Activated CD4-positive, alpha-beta T cell treated with anti-CD3 and anti-CD28 coated beads for 36 hours (primary cell): ENCODE measurements at regions of chr11 and their contacts with region 1.

Region 1: GRCh38 chr11:129279326-129280026 is 87.4 kb upstream of the ARHGAP32 start:
- DNase-seq: peak; percentile 79
- ATAC-seq: peak; percentile 30
- H3K4me3 Mint-ChIP-seq: peak overlapping the region; percentile 76
- H3K27ac Mint-ChIP-seq: peak overlapping the region; percentile 90
- H3K4me1 Mint-ChIP-seq: peaks cover 41% of the 10 kb centered on the region
- H3K27me3 Mint-ChIP-seq: peaks cover 14% of the 10 kb centered on the region

Region 2: GRCh38 chr11:129117595-129118350 is 161.7 kb before region 1 on chr11:
- CTCF ChIA-PET with region 1: interaction called, 3 read pairs
- POLR2A ChIA-PET with region 1: no interaction called
- intact Hi-C with region 1: loop called (anchors 1 to 2 kb)
- DNase-seq: peak; percentile 62
- ATAC-seq: no peak
- H3K4me3 Mint-ChIP-seq: no peak overlapping the region
- H3K27ac Mint-ChIP-seq: no peak overlapping the region
- H3K4me1 Mint-ChIP-seq: peaks cover 11% of the 10 kb centered on the region
- H3K27me3 Mint-ChIP-seq: no peaks in the 10 kb centered on the region

Region 3: GRCh38 chr11:129223701-129224149 is 55.8 kb before region 1 on chr11:
- CTCF ChIA-PET with region 1: no interaction called
- POLR2A ChIA-PET with region 1: no interaction called
- intact Hi-C with region 1: no loop called
- DNase-seq: no peak
- ATAC-seq: no peak
- H3K4me3 Mint-ChIP-seq: no peak overlapping the region
- H3K27ac Mint-ChIP-seq: no peak overlapping the region
- H3K4me1 Mint-ChIP-seq: no peaks in the 10 kb centered on the region
- H3K27me3 Mint-ChIP-seq: no peaks in the 10 kb centered on the region

Region 4: GRCh38 chr11:129639300-129639699 is 359.8 kb after region 1 on chr11:
- CTCF ChIA-PET with region 1: no interaction called
- POLR2A ChIA-PET with region 1: no interaction called
- intact Hi-C with region 1: loop called in 1 of 2 experiments (anchors 1 kb)
- DNase-seq: peak; percentile 66
- ATAC-seq: peak; percentile 81
- H3K4me3 Mint-ChIP-seq: no peak overlapping the region
- H3K27ac Mint-ChIP-seq: peak overlapping the region; percentile 72
- H3K4me1 Mint-ChIP-seq: peaks cover 75% of the 10 kb centered on the region
- H3K27me3 Mint-ChIP-seq: peaks cover 3% of the 10 kb centered on the region

Region 5: DNA sequence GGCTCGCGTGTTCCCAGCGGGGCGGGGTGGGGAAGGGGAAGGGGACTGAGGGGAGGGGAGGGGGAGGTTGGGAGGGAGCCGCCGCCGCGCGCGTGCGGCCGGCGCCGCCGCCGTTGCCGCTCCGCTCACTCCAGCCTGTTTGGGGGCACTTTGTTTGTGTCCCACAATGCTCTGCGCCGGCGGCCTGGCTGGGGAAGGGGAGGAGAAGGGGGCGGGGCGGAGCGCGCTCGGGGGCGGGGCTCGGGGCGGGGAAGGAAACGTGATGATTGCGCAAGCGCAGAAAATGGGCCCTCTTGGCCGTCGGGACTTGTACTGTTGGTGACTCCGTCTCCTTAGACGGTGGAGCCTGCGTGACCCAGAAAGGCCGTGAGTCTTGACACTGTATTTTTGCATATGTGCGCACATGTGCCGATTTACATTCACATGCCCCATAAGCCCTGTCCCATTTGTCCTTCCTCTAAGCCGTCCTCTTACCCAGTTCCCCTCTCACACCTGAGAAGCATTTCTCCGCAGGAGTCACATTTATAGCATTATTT is 1035.3 kb after region 1 on chr11 and contains the start of gene ZBTB44:
- CTCF ChIA-PET with region 1: no interaction called
- POLR2A ChIA-PET with region 1: no interaction called
- intact Hi-C with region 1: loop called in 1 of 2 experiments (anchors 10 kb)
- DNase-seq: peak; percentile 96
- ATAC-seq: peak; percentile 78
- H3K4me3 Mint-ChIP-seq: peak within 1 kb of the TSS; percentile 83
- H3K27ac Mint-ChIP-seq: peak within 1 kb of the TSS; percentile 95
- H3K4me1 Mint-ChIP-seq: peaks cover 36% of the 10 kb centered on the region
- H3K27me3 Mint-ChIP-seq: no peaks in the 10 kb centered on the region
- total RNA-seq, gene ZBTB44: 38.2 to 49.4 TPM